ENCODE measurements at regions of chr6 and their contacts with region 1.

Region 1: DNA sequence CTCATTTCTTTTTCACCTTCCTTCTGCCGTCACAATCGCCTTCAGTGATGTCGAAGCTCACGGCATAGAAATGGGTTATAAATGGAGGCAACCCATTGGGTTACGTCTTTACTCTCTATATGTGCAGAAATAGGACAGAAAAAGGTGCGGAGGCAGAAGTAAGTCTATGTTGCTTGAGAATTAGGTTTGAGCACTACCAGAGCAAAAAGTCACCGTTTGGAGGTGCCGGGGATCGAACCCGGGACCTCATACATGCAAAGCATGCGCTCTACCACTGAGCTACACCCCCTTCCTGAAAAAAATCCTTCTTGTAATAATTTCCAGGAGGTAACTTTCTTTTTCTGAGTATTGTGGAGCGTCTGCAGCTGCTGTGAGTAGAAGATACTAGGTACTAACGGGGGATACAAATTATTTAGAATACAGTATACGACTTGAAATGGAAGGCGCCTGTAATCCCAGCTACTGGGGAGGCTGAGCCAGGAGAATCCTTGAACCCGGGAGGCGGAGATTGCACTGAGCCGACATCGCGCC is 134.2 kb downstream of the TRIM27 start:
- DNase-seq: no peak
- ATAC-seq: peak; percentile 81
- H3K4me3 ChIP-seq: peak overlapping the region; percentile 66 to 96
- H3K27ac ChIP-seq: no peak overlapping the region
- H3K4me1 ChIP-seq: peaks cover under 1% of the 10 kb centered on the region; the same call in 1 of the 2 replicates
- H3K27me3 ChIP-seq: peaks cover 2% of the 10 kb centered on the region; the same call in 1 of the 2 replicates
- CTCF ChIP-seq: no peak

Region 2: GRCh38 chr6:27617700-27618689 is 1171.6 kb before region 1 on chr6:
- CTCF ChIA-PET with region 1: no interaction called
- POLR2A ChIA-PET with region 1: no interaction called
- in situ Hi-C with region 1: no loop called
- intact Hi-C with region 1: no loop called
- DNase-seq: no peak
- ATAC-seq: peak; percentile 92
- H3K4me3 ChIP-seq: peak overlapping the region; percentile 71 to 84
- H3K27ac ChIP-seq: peak overlapping the region; percentile 45; the same call in 1 of the 2 replicates
- H3K4me1 ChIP-seq: 0 out of 2 replicates have a peak, but pooled peaks cover 3% of the 10 kb centered on the region
- H3K27me3 ChIP-seq: 0 out of 2 replicates have a peak, but pooled peaks cover 2% of the 10 kb centered on the region
- CTCF ChIP-seq: peak; percentile 37; the same call in 1 of the 2 replicates

Region 3: GRCh38 chr6:28634761-28635546 is 154.7 kb before region 1 on chr6:
- CTCF ChIA-PET with region 1: no interaction called
- POLR2A ChIA-PET with region 1: no interaction called
- in situ Hi-C with region 1: no loop called
- intact Hi-C with region 1: no loop called
- DNase-seq: no peak
- ATAC-seq: peak; percentile 91
- H3K4me3 ChIP-seq: peak overlapping the region; percentile 56 to 75
- H3K27ac ChIP-seq: no peak overlapping the region
- H3K4me1 ChIP-seq: no peaks in the 10 kb centered on the region
- H3K27me3 ChIP-seq: no peaks in the 10 kb centered on the region
- CTCF ChIP-seq: no peak

Region 4: DNA sequence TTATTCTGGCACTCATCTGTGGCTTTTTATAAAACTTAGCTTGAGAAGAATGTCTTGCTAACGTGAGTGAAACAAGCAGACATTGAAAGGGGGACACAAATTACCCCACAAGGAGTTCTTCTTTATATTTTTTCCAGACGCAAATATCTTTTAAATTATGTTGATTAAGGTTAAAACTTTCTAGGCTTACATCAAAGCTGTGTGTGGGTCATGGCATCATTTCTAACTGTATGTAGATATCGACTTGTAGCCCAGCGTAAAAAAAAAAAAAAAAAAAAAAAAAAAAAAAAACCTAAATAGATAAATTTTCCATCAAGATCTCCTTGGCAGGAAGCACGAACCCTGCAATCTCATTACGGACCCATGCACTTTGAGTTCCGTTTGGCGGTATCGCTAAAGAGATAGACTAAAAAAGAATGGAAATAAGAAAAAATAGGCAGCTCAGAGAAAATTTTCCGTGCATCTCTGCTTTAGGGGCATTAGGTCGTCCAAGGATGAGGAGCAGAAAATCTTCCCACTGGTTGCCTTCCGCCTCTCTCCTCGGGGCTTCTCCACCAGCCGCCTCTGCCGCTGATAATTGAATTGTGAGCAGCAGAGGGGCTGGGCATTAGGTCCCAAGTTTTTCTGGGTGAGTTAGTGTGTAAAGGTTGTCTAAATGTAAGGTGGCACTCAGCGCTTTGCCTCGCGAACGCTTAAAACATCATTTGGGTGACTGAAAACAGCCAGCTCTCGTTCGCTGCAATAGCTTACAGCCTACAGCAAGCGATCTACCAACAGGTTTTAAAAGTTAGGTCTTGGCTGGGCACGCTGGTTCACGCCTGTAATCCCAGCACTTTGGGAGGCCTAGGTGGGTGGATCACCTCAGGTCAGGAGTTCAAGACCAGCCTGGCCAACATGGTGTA is 59.9 kb before region 1 on chr6:
- CTCF ChIA-PET with region 1: no interaction called
- POLR2A ChIA-PET with region 1: interaction called, 14 read pairs
- in situ Hi-C with region 1: no loop called
- intact Hi-C with region 1: no loop called
- DNase-seq: no peak
- ATAC-seq: no peak
- H3K4me3 ChIP-seq: peak overlapping the region; percentile 89 to 96; a peak in 3 of 4 replicates
- H3K27ac ChIP-seq: no peak overlapping the region
- H3K4me1 ChIP-seq: peaks cover 31% of the 10 kb centered on the region
- H3K27me3 ChIP-seq: 0 out of 2 replicates have a peak, but pooled peaks cover 2% of the 10 kb centered on the region
- CTCF ChIP-seq: no peak

Region 5: DNA sequence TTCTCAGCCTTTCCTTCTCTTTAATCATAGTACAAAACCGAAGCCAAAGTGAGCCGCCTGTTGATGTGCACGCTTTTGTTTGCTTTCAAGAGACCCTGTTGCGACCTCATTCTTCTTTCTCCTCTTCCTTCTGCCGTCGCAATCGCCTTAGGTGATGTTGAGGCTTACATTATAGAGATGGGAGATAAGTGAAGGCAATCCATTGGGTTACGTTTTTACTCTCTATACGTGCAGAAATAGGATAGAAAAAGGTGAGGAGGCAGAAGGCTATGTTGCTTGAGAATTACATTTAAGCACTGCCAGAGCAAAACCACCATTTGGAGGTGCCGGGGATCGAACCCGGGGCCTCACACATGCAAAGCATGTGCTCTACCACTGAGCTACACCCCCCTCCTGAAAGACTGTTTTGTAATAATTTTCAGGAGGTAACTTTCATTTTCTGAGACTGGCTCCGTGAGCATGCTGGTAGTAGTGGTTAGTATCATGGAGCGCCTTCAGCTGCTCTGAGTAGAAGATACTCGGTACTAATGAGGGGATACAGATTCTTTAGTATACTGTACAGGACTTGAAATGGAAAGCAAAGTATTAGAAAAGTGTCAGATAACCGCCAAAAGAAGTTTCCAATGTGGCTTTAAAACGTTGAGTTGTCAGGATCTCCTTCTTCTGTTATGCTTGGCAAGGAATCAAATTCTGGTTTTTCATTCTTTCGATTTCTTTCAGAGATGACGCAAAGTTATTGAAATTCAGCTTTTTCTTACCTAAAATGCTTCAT is 31.4 kb before region 1 on chr6:
- CTCF ChIA-PET with region 1: no interaction called
- POLR2A ChIA-PET with region 1: interaction called, 11 read pairs
- in situ Hi-C with region 1: no loop called
- intact Hi-C with region 1: loop called (anchors 5 kb)
- DNase-seq: peak; percentile 96
- ATAC-seq: peak; percentile 96
- H3K4me3 ChIP-seq: peak overlapping the region; percentile 52 to 84
- H3K27ac ChIP-seq: peak overlapping the region; percentile 72
- H3K4me1 ChIP-seq: peaks cover 11% of the 10 kb centered on the region; the same call in 1 of the 2 replicates
- H3K27me3 ChIP-seq: no peaks in the 10 kb centered on the region
- CTCF ChIP-seq: no peak